ENCODE measurements at regions of chr7 and their contacts with region 1.

Region 1: DNA sequence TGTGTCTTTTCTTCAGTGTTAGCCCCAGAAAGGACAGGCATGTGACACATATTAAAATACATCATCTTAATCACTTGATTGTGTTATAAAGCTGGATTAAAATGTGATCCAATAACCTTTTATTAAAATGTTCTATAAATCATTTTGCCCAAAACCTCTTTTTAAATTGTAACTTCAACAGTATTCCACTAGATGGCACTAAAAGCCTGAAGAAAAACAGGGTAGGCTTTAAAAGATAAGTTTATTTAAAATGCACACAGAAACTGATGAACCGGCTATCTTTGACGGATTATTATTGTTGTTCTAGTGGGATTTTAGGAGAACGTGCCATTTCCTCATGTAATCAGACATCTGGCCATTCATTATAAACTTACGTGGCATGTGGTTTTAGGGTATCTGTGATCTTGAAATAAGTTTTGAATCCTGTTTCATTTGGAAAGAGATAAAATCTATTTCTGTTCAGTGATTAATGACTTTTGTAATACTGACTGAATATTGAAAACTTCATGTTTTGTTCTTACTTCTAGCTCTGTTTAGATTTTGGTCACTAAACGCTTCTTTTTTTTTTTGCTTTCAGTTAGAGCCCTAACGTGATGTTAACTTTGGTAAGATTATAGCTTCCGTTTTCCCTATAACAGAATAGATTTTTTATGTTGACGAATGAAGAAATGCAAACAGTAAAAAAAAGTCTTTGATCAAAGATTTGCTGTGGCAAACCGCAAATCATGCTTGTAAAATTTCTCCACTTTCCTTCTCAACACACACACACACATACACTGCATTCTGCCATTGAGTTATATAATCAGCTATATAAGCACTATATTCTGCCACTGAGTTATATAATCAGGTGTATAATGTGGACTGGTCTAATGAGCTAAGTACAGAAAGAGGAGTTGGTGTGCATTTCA is 13.6 kb downstream of the VPS50 start:
- DNase-seq: no peak
- ATAC-seq: peak; percentile 25
- H3K4me3 Mint-ChIP-seq: no peak overlapping the region
- H3K27ac Mint-ChIP-seq: no peak overlapping the region
- H3K4me1 Mint-ChIP-seq: peaks cover 2% of the 10 kb centered on the region
- H3K27me3 Mint-ChIP-seq: no peaks in the 10 kb centered on the region
- CTCF ChIP-seq: peak; percentile 42

Region 2: DNA sequence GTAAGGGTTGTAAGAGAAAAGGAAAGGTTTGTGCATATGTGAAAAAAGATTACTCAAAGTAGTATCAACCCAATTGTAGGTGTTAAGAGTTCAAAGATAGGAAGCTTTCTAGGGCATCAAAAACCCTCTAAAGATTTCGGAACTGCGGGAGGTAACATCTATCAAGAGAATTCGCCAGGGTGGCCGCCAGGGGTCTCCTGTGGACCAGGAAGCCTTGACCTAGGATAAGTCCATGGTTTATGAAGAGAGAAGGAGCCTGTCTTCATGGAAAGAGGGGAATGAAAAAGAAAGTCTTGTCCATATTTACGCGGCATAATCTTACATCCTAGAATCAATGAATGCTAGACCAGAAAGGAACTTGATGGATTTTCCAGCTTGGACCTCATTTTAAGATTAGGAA is 469.5 kb after region 1 on chr7:
- CTCF ChIA-PET with region 1: no interaction called
- POLR2A ChIA-PET with region 1: no interaction called
- intact Hi-C with region 1: loop called (anchors 10 kb)
- DNase-seq: peak; percentile 14
- ATAC-seq: no peak
- H3K4me3 Mint-ChIP-seq: no peak overlapping the region
- H3K27ac Mint-ChIP-seq: no peak overlapping the region
- H3K4me1 Mint-ChIP-seq: no peaks in the 10 kb centered on the region
- H3K27me3 Mint-ChIP-seq: peaks cover 10% of the 10 kb centered on the region
- CTCF ChIP-seq: no peak

Region 3: DNA sequence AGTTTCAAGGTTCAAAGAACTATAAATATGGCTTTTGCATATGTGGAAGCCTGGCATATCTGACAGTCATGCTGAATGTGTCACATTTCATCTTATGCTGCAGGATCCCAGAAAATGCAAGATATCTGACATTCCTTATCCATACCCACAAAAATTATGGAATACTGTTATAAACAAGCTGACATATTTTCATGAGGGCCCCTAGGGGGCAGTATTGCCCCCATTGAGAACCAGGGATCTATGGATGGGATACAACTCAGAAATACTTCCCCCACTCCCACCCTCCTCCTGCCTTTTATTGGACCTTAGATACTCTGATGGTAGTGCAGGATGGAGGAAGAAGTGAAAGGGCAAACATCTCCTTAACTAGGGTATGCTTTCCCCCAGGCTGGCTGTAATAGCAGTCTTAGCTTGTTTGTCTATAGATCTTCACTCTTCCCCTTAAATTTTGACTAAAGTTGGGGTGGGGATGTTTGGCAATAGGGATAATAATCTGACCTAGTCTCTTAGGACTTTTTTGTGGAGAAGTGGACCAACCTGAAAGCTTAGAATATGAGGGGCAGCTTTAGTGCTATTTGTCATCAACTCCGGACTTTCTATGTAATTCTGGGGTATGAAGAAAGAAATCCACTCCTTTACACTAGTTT is 657.1 kb after region 1 on chr7:
- CTCF ChIA-PET with region 1: no interaction called
- POLR2A ChIA-PET with region 1: no interaction called
- intact Hi-C with region 1: loop called (anchors 5 kb)
- DNase-seq: no peak
- ATAC-seq: no peak
- H3K4me3 Mint-ChIP-seq: no peak overlapping the region
- H3K27ac Mint-ChIP-seq: no peak overlapping the region
- H3K4me1 Mint-ChIP-seq: no peaks in the 10 kb centered on the region
- H3K27me3 Mint-ChIP-seq: peaks cover 17% of the 10 kb centered on the region
- CTCF ChIP-seq: peak; percentile 74

Region 4: DNA sequence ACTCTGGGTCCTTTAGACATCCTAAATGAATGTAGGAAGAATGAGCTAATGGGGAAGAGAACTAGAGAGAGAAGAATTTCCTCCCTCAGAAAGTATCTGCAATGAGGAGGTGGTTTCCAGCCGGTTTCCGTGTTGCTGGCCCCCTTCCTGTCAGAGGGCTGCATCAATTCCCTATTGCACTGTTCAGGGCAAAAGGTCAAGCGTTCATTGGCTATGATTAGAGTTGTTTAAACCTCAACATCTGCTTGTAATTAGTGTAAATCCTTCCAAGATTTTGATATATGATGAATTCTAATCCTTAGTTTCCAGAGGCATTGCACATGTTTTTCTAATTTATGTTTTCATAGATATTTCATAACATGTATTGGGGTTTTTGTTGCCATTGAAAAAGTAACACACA is 1517.5 kb after region 1 on chr7:
- CTCF ChIA-PET with region 1: no interaction called
- POLR2A ChIA-PET with region 1: no interaction called
- intact Hi-C with region 1: no loop called
- DNase-seq: no peak
- ATAC-seq: no peak
- H3K4me3 Mint-ChIP-seq: no peak overlapping the region
- H3K27ac Mint-ChIP-seq: no peak overlapping the region
- H3K4me1 Mint-ChIP-seq: no peaks in the 10 kb centered on the region
- H3K27me3 Mint-ChIP-seq: no peaks in the 10 kb centered on the region
- CTCF ChIP-seq: no peak